B cell (primary cell): ENCODE measurements at regions of chr17 and their contacts with region 1.

Region 1: DNA sequence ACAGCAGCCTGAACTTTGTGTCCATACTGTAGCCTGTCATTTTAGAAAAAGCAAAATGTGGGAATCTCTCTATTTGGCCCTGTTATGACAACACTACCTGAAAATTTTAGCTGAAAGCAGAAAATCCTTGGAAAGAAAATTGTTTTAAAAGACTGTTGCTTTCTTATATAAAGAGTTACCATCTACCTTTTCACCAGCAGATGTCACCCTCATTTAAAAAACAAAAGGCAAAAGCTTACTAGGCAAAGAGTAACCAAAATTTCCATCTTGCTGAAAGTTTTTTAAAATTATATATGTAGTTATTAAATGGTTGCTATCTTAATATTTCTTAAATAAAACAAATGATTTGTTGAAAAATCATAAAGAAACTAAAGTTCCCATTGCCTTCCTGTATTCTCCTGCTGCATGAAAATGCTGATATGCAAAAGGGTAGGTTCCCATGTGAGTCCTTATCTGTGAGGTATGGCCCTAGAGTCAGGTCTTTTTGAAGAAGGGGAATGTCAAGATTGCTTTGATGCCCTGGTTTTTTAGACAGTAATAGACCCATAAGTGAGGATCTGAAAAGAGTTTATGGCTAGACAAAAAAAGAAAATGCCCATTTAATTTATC is 61.0 kb downstream of the TNRC6C start:
- DNase-seq: peak; percentile 41
- ATAC-seq: no peak
- H3K4me3 ChIP-seq: no peak overlapping the region
- H3K4me3 Mint-ChIP-seq: no peak overlapping the region
- H3K27ac ChIP-seq: no peak overlapping the region
- H3K27ac Mint-ChIP-seq: no peak overlapping the region
- H3K4me1 ChIP-seq: no peaks in the 10 kb centered on the region
- H3K4me1 Mint-ChIP-seq: peaks cover 6% of the 10 kb centered on the region
- H3K27me3 ChIP-seq: no peaks in the 10 kb centered on the region
- H3K27me3 Mint-ChIP-seq: no peaks in the 10 kb centered on the region
- CTCF ChIP-seq: peak; percentile 77

Region 2: DNA sequence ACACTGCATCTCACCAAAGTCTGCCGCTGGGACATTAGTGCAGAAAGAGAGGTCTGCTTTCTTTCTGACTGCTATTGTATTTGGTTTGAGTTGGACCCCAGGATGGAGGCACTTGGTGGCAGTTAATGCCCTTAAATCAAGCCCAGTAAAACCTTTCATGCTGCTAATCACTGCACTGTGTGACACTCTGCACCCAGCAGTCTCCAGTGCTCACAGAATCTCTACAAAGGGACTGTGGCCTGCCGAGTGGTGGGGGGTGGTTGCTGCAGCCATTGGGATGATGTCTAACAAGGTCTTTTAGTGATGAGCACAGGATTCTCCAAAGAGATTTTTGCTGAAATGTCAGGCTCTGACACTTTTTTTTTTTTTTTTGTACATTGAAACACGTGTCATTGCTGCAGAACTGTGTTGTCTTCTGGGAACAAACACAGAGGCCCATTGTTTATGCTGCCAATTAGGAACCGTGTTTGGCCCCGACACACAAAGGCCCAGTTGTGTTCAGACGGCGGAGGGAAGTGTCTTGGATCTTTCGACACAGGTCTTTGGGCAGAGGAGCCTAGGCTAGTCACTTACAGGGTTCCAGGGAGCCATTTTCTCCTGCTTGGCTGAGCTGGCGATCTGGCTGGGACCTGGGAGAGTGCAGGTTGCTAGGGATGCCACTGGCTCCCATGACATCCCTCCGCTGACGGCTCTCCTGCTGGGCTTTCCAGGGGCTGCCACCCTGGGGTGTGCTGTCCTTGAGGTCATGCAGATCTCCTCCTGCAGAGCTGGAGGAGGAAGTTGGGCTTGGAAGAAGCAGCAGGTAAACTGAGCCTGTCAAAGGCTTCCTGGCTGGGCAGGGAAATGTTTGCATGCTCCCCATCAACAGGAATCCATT is 77.1 kb before region 1 on chr17:
- CTCF ChIA-PET with region 1: no interaction called
- POLR2A ChIA-PET with region 1: no interaction called
- intact Hi-C with region 1: no loop called
- DNase-seq: no peak
- ATAC-seq: no peak
- H3K4me3 ChIP-seq: no peak overlapping the region
- H3K4me3 Mint-ChIP-seq: no peak overlapping the region
- H3K27ac ChIP-seq: no peak overlapping the region
- H3K27ac Mint-ChIP-seq: no peak overlapping the region
- H3K4me1 ChIP-seq: no peaks in the 10 kb centered on the region
- H3K4me1 Mint-ChIP-seq: no peaks in the 10 kb centered on the region
- H3K27me3 ChIP-seq: peaks cover 0 to 25% (median 8%) of the 10 kb centered on the region in 4 experiments
- H3K27me3 Mint-ChIP-seq: peaks cover 44% of the 10 kb centered on the region
- CTCF ChIP-seq: no peak

Region 3: GRCh38 chr17:78005452-78006171 is 13.9 kb before region 1 on chr17:
- CTCF ChIA-PET with region 1: interaction called, 25 read pairs
- POLR2A ChIA-PET with region 1: no interaction called
- intact Hi-C with region 1: no loop called
- DNase-seq: no peak
- ATAC-seq: no peak
- H3K4me3 ChIP-seq: no peak overlapping the region
- H3K4me3 Mint-ChIP-seq: no peak overlapping the region
- H3K27ac ChIP-seq: no peak overlapping the region
- H3K27ac Mint-ChIP-seq: no peak overlapping the region
- H3K4me1 ChIP-seq: no peaks in the 10 kb centered on the region
- H3K4me1 Mint-ChIP-seq: peaks cover 16% of the 10 kb centered on the region
- H3K27me3 ChIP-seq: no peaks in the 10 kb centered on the region
- H3K27me3 Mint-ChIP-seq: no peaks in the 10 kb centered on the region
- CTCF ChIP-seq: no peak

Region 4: GRCh38 chr17:78107457-78107856 is 88.0 kb after region 1 on chr17:
- CTCF ChIA-PET with region 1: no interaction called
- POLR2A ChIA-PET with region 1: no interaction called
- intact Hi-C with region 1: no loop called
- DNase-seq: no peak
- ATAC-seq: no peak
- H3K4me3 ChIP-seq: no peak overlapping the region
- H3K4me3 Mint-ChIP-seq: no peak overlapping the region
- H3K27ac ChIP-seq: no peak overlapping the region
- H3K27ac Mint-ChIP-seq: peak overlapping the region; percentile 41
- H3K4me1 ChIP-seq: peaks cover 1 to 3% of the 10 kb centered on the region in 2 donors
- H3K4me1 Mint-ChIP-seq: peaks cover 4% of the 10 kb centered on the region
- H3K27me3 ChIP-seq: no peaks in the 10 kb centered on the region
- H3K27me3 Mint-ChIP-seq: no peaks in the 10 kb centered on the region
- CTCF ChIP-seq: no peak

Region 5: GRCh38 chr17:78998311-78999055 is 979.0 kb after region 1 on chr17:
- CTCF ChIA-PET with region 1: no interaction called
- POLR2A ChIA-PET with region 1: no interaction called
- intact Hi-C with region 1: no loop called
- DNase-seq: no peak
- ATAC-seq: no peak
- H3K4me3 ChIP-seq: no peak overlapping the region
- H3K4me3 Mint-ChIP-seq: no peak overlapping the region
- H3K27ac ChIP-seq: no peak overlapping the region
- H3K27ac Mint-ChIP-seq: no peak overlapping the region
- H3K4me1 ChIP-seq: no peaks in the 10 kb centered on the region
- H3K4me1 Mint-ChIP-seq: peaks cover 6% of the 10 kb centered on the region
- H3K27me3 ChIP-seq: no peaks in the 10 kb centered on the region
- H3K27me3 Mint-ChIP-seq: no peaks in the 10 kb centered on the region
- CTCF ChIP-seq: no peak